ENCODE measurements at regions of chr1 and their contacts with region 1.

Region 1: DNA sequence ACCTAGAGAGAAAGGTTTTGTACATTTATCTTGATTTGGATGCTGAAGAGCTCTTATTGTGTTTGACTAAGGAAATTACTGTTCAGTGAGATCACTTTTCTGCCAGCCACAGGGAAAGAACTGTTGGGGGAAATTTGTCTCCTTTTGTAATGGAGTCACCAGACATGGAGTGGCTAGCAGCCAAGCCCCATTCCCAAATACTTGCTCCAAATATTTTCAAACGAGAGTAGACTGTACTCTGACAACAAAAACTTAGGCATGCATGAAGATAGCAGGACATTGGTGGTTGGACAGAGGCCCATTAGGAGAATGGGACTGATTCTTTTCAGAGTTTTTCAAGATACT is 21.1 kb downstream of the IPO9 start:
- DNase-seq: no peak
- H3K4me3 ChIP-seq: no peak overlapping the region
- H3K4me3 Mint-ChIP-seq: no peak overlapping the region
- H3K27ac Mint-ChIP-seq: no peak overlapping the region
- H3K4me1 ChIP-seq: no peaks in the 10 kb centered on the region
- H3K4me1 Mint-ChIP-seq: no peaks in the 10 kb centered on the region
- H3K27me3 ChIP-seq: no peaks in the 10 kb centered on the region
- H3K27me3 Mint-ChIP-seq: no peaks in the 10 kb centered on the region
- CTCF ChIP-seq: no peak

Region 2: GRCh38 chr1:201870397-201870796 is 20.4 kb after region 1 on chr1:
- CTCF ChIA-PET with region 1: no interaction called
- POLR2A ChIA-PET with region 1: interaction called, 11 read pairs
- intact Hi-C with region 1: no loop called
- DNase-seq: no peak
- H3K4me3 ChIP-seq: no peak overlapping the region
- H3K4me3 Mint-ChIP-seq: no peak overlapping the region
- H3K27ac Mint-ChIP-seq: no peak overlapping the region
- H3K4me1 ChIP-seq: no peaks in the 10 kb centered on the region
- H3K4me1 Mint-ChIP-seq: no peaks in the 10 kb centered on the region
- H3K27me3 ChIP-seq: no peaks in the 10 kb centered on the region
- H3K27me3 Mint-ChIP-seq: no peaks in the 10 kb centered on the region
- CTCF ChIP-seq: no peak

Measured in Caco-2 (cell line).